ENCODE measurements at regions of chr3 and their contacts with region 1.

Region 1: DNA sequence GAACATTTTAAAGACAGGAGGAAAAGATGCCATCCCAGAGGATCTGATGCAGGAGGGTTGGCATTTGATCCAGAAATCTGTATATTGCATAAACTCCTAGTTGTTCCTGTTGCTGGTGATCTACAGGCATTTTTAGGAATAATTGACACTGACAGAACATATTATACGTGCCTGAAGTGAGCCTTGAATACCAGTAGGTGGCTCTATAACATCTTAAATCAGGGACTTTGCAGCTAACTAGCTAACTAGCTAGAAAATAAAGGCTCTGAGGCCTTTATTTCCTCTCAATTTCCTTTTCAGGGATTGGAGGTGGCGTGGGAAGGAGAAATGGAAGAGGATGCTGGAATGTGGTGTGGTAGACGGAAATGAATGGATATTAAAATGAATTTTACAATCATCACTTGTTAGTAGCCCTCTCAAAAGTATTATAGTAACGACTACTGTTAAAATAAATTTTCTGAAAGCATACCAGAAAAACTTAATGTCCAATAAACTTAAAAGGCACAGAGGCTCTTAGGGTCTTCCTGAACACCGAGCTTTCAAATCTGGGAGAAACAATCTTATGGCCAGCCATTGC is 73.9 kb upstream of the ZBED2 start:
- DNase-seq: peak in 3 of 14 experiments; percentile 68 to 73 (median 70)
- ATAC-seq: peak; percentile 44
- H3K4me3 ChIP-seq: no peak overlapping the region
- H3K4me3 Mint-ChIP-seq: peak overlapping the region; percentile 73
- H3K27ac ChIP-seq: peak overlapping the region in 1 of 2 donors; percentile 3
- H3K27ac Mint-ChIP-seq: peak overlapping the region; percentile 73
- H3K4me1 ChIP-seq: peaks cover 53% of the 10 kb centered on the region
- H3K4me1 Mint-ChIP-seq: peaks cover 68% of the 10 kb centered on the region
- H3K27me3 ChIP-seq: no peaks in the 10 kb centered on the region
- H3K27me3 Mint-ChIP-seq: no peaks in the 10 kb centered on the region
- CTCF ChIP-seq: peak; percentile 87

Region 2: DNA sequence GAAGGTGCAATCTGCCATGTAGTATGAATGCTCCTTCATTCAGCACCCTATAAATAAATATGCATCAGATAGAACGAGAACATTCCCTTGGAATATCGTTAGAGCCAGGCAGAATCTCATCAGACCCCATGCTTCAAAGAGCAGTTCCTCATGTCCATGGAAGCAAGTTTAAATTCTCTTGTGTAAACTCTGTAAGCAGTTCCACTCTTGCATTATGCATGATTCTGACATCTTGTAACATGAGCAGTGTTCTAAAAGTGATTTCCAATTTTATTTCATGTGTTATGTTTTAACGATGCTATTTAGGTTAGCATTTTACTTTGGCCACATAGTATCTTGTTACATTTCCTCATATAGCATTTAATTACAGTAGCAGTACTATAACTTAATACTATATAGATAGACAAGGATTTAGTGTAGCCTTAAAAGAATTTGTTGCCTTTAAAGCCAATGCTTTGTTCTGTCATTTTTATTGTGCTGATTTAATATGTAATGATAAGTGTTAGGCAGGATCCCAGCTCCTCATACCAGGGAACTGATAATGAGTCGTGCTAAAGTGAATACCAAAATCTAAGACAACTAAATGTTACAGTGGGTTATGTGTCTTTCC is 758.5 kb before region 1 on chr3:
- CTCF ChIA-PET with region 1: no interaction called
- POLR2A ChIA-PET with region 1: no interaction called
- intact Hi-C with region 1: no loop called
- DNase-seq: no peak
- ATAC-seq: no peak
- H3K4me3 ChIP-seq: no peak overlapping the region
- H3K4me3 Mint-ChIP-seq: no peak overlapping the region
- H3K27ac ChIP-seq: no peak overlapping the region
- H3K27ac Mint-ChIP-seq: no peak overlapping the region
- H3K4me1 ChIP-seq: no peaks in the 10 kb centered on the region
- H3K4me1 Mint-ChIP-seq: no peaks in the 10 kb centered on the region
- H3K27me3 ChIP-seq: no peaks in the 10 kb centered on the region
- H3K27me3 Mint-ChIP-seq: no peaks in the 10 kb centered on the region
- CTCF ChIP-seq: no peak

Region 3: GRCh38 chr3:111071257-111072015 is 597.6 kb before region 1 on chr3 and contains the start of gene NECTIN3:
- CTCF ChIA-PET with region 1: no interaction called
- POLR2A ChIA-PET with region 1: no interaction called
- intact Hi-C with region 1: loop called in 1 of 2 experiments (anchors 5 kb)
- DNase-seq: peak; percentile 71 to 95 (median 83)
- ATAC-seq: peak; percentile 93
- H3K4me3 ChIP-seq: peak within 1 kb of the TSS; percentile 78
- H3K4me3 Mint-ChIP-seq: peak within 1 kb of the TSS; percentile 97
- H3K27ac ChIP-seq: no peak within 1 kb of the TSS
- H3K27ac Mint-ChIP-seq: peak within 1 kb of the TSS; percentile 90
- H3K4me1 ChIP-seq: peaks cover 19% of the 10 kb centered on the region
- H3K4me1 Mint-ChIP-seq: peaks cover 44% of the 10 kb centered on the region
- H3K27me3 ChIP-seq: peaks cover 0 to 18% of the 10 kb centered on the region in 2 experiments
- H3K27me3 Mint-ChIP-seq: peaks cover 35% of the 10 kb centered on the region
- CTCF ChIP-seq: no peak
- total RNA-seq, gene NECTIN3: 7.8 to 8.5 TPM

Region 4: GRCh38 chr3:111610189-111610588 is 58.8 kb before region 1 on chr3:
- CTCF ChIA-PET with region 1: interaction called, 4 read pairs
- POLR2A ChIA-PET with region 1: interaction called, 10 read pairs
- intact Hi-C with region 1: loop called in 1 of 2 experiments (anchors 5 kb)
- DNase-seq: peak in 6 of 14 experiments; percentile 16 to 94 (median 68)
- ATAC-seq: peak; percentile 88
- H3K4me3 ChIP-seq: no peak overlapping the region
- H3K4me3 Mint-ChIP-seq: peak overlapping the region; percentile 54
- H3K27ac ChIP-seq: peak overlapping the region; percentile 43 to 58
- H3K27ac Mint-ChIP-seq: peak overlapping the region; percentile 88
- H3K4me1 ChIP-seq: peaks cover 23% of the 10 kb centered on the region
- H3K4me1 Mint-ChIP-seq: peaks cover 64% of the 10 kb centered on the region
- H3K27me3 ChIP-seq: no peaks in the 10 kb centered on the region
- H3K27me3 Mint-ChIP-seq: no peaks in the 10 kb centered on the region
- CTCF ChIP-seq: no peak

Region 5: GRCh38 chr3:111684640-111685039 is 15.6 kb after region 1 on chr3:
- CTCF ChIA-PET with region 1: interaction called, 7 read pairs
- POLR2A ChIA-PET with region 1: interaction called, 5 read pairs
- intact Hi-C with region 1: loop called in 1 of 2 experiments (anchors 1 kb)
- DNase-seq: no peak
- ATAC-seq: no peak
- H3K4me3 ChIP-seq: no peak overlapping the region
- H3K4me3 Mint-ChIP-seq: no peak overlapping the region
- H3K27ac ChIP-seq: no peak overlapping the region
- H3K27ac Mint-ChIP-seq: no peak overlapping the region
- H3K4me1 ChIP-seq: no peaks in the 10 kb centered on the region
- H3K4me1 Mint-ChIP-seq: peaks cover 49% of the 10 kb centered on the region
- H3K27me3 ChIP-seq: no peaks in the 10 kb centered on the region
- H3K27me3 Mint-ChIP-seq: no peaks in the 10 kb centered on the region
- CTCF ChIP-seq: no peak

Region 6: GRCh38 chr3:111717601-111718000 is 48.6 kb after region 1 on chr3:
- CTCF ChIA-PET with region 1: interaction called, 31 read pairs
- POLR2A ChIA-PET with region 1: no interaction called
- intact Hi-C with region 1: loop called (anchors 1 to 2 kb)
- DNase-seq: peak; percentile 36 to 85 (median 54)
- ATAC-seq: peak; percentile 96
- H3K4me3 ChIP-seq: no peak overlapping the region
- H3K4me3 Mint-ChIP-seq: no peak overlapping the region
- H3K27ac ChIP-seq: no peak overlapping the region
- H3K27ac Mint-ChIP-seq: no peak overlapping the region
- H3K4me1 ChIP-seq: no peaks in the 10 kb centered on the region
- H3K4me1 Mint-ChIP-seq: no peaks in the 10 kb centered on the region
- H3K27me3 ChIP-seq: no peaks in the 10 kb centered on the region
- H3K27me3 Mint-ChIP-seq: no peaks in the 10 kb centered on the region
- CTCF ChIP-seq: peak; percentile 90

Measured in CD4-positive, alpha-beta T cell (primary cell).